ENCODE measurements at regions of chr7 and their contacts with region 1.

Region 1: GRCh38 chr7:150378853-150379440 is at the start of gene ZNF775:
- DNase-seq: peak; percentile 82 to 95 (median 91)
- ATAC-seq: peak; percentile 93
- H3K4me3 ChIP-seq: peak within 1 kb of the TSS; percentile 83 to 84
- H3K4me3 Mint-ChIP-seq: peak within 1 kb of the TSS; percentile 86
- H3K27ac ChIP-seq: peak within 1 kb of the TSS; percentile 10 to 48
- H3K27ac Mint-ChIP-seq: peak within 1 kb of the TSS; percentile 93
- H3K4me1 ChIP-seq: peaks cover 37% of the 10 kb centered on the region
- H3K4me1 Mint-ChIP-seq: peaks cover 53% of the 10 kb centered on the region
- H3K27me3 ChIP-seq: no peaks in the 10 kb centered on the region
- H3K27me3 Mint-ChIP-seq: no peaks in the 10 kb centered on the region
- CTCF ChIP-seq: no peak
- total RNA-seq, gene ZNF775: 0.33 to 0.58 TPM

Region 2: DNA sequence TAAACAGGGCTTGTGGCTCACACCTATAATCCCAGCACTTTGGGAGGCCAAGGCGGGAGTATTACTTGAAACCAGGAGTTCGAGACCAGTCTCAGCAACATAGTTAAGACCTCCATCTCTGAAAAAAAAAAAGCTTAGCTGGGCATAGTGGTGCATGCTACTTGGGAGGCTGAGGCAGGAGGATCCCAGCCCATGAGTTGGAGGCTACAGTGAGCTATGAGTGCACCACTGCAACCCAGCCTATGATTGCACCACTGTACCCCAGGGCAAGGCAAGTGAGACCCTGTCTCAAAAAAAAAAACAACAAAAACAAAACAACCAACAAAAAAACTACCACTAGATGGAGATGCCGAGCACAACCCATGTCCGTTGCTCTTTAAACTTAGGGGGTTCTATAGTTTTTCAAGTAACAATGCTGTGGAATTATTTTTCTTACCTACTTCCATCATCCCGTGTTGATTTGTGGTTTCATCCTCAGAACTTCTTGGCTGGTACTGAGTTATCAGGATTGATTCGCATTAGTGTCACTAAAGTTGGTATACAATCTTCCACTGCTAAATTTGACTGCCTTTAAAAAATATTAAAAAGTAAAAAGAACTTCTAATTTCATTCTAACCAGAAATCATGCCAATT is 22.6 kb before region 1 on chr7:
- CTCF ChIA-PET with region 1: interaction called, 8 read pairs
- POLR2A ChIA-PET with region 1: interaction called, 12 read pairs
- intact Hi-C with region 1: loop called (anchors 1 kb)
- DNase-seq: peak in 2 of 9 experiments; percentile 73 to 79
- ATAC-seq: no peak
- H3K4me3 ChIP-seq: no peak overlapping the region
- H3K4me3 Mint-ChIP-seq: peak overlapping the region; percentile 18
- H3K27ac ChIP-seq: no peak overlapping the region
- H3K27ac Mint-ChIP-seq: peak overlapping the region; percentile 46
- H3K4me1 ChIP-seq: peaks cover 37% of the 10 kb centered on the region
- H3K4me1 Mint-ChIP-seq: peaks cover 39% of the 10 kb centered on the region
- H3K27me3 ChIP-seq: peaks cover 0 to 7% of the 10 kb centered on the region in 2 experiments
- H3K27me3 Mint-ChIP-seq: no peaks in the 10 kb centered on the region
- CTCF ChIP-seq: peak; percentile 78

Region 3: GRCh38 chr7:150404805-150405583 is 26.0 kb after region 1 on chr7:
- CTCF ChIA-PET with region 1: interaction called, 4 read pairs
- POLR2A ChIA-PET with region 1: interaction called, 29 read pairs
- intact Hi-C with region 1: loop called (anchors 1 kb)
- DNase-seq: peak; percentile 61 to 91 (median 76)
- ATAC-seq: peak; percentile 81
- H3K4me3 ChIP-seq: peak overlapping the region; percentile 86 to 88
- H3K4me3 Mint-ChIP-seq: peak overlapping the region; percentile 94
- H3K27ac ChIP-seq: peak overlapping the region; percentile 80 to 93
- H3K27ac Mint-ChIP-seq: peak overlapping the region; percentile 100
- H3K4me1 ChIP-seq: peaks cover 30% of the 10 kb centered on the region
- H3K4me1 Mint-ChIP-seq: peaks cover 39% of the 10 kb centered on the region
- H3K27me3 ChIP-seq: no peaks in the 10 kb centered on the region
- H3K27me3 Mint-ChIP-seq: no peaks in the 10 kb centered on the region
- CTCF ChIP-seq: no peak

Region 4: DNA sequence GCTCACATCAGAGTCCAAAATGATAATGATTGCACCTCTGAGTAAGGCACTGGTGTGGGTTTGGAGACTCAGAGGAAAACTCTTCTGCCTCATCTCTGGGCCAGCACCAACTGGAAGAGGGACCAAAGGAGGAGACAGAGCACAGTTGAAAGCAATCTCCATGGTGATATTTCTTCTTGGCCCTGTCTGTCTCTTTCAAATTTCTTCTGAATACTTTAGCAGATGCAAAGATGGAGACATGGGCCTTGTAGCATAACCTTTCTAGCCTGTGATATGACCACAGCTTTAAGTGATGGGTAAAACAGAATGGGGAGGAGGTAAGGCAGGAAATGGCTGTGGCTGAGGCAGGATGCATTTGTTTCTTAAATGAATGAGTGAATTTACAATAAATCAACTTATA is 123.6 kb after region 1 on chr7:
- CTCF ChIA-PET with region 1: no interaction called
- POLR2A ChIA-PET with region 1: no interaction called
- intact Hi-C with region 1: loop called in 1 of 2 experiments (anchors 2 kb)
- DNase-seq: peak in 5 of 9 experiments; percentile 29 to 77 (median 61)
- ATAC-seq: peak; percentile 92
- H3K4me3 ChIP-seq: peak overlapping the region in 1 of 2 experiments; percentile 27
- H3K4me3 Mint-ChIP-seq: peak overlapping the region; percentile 23
- H3K27ac ChIP-seq: peak overlapping the region; percentile 22 to 61
- H3K27ac Mint-ChIP-seq: peak overlapping the region; percentile 86
- H3K4me1 ChIP-seq: peaks cover 46% of the 10 kb centered on the region
- H3K4me1 Mint-ChIP-seq: peaks cover 78% of the 10 kb centered on the region
- H3K27me3 ChIP-seq: no peaks in the 10 kb centered on the region
- H3K27me3 Mint-ChIP-seq: no peaks in the 10 kb centered on the region
- CTCF ChIP-seq: no peak

Measured in CD8-positive, alpha-beta T cell (primary cell).